ENCODE measurements at regions of chr10 and their contacts with region 1.

Region 1: DNA sequence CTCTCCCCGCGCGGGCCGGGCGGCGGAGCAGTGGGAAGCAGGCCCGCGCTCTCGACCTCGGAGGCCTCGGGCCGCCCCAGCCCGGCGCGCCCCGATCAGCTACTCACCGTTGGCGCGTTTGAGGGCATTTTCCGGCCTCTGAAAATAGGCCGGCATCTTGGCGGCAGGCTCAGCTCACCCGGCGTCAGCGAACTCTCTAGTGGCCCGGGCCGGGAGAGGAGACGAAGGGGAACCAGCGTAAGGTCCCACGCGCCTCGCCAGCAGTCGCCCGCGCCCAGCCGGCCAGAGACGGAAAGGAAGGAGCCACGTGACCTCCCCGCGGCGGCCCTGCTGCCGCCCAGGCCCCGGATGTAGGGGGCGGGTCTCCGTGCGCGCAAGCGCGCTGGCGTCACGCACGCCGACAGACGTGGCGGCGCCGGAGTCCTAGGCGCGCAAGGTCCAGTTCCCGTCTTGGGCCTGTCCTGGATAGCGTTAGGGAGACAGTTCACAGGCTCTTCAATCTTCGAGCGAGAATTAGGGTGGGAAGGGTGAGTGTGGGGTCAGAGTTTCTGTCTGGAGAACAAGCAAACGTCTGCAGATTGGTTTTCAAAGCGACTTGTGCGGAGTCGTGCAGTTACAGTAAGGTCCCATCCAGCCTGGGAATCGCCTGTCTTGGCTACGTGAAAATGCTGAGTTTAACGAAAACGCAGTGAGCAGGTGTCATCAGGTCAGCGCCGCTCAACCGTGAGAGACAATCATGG is at the start of gene EIF3A:
- DNase-seq: peak; percentile 96
- ATAC-seq: peak; percentile 97
- total RNA-seq, gene EIF3A: 88.7 TPM

Region 2: GRCh38 chr10:119103903-119104652 is 23.4 kb after region 1 on chr10 and contains the start of gene DENND10:
- intact Hi-C with region 1: loop called (anchors 2 kb)
- DNase-seq: peak; percentile 91
- ATAC-seq: peak; percentile 96
- total RNA-seq, gene DENND10: 20.2 TPM

Region 3: DNA sequence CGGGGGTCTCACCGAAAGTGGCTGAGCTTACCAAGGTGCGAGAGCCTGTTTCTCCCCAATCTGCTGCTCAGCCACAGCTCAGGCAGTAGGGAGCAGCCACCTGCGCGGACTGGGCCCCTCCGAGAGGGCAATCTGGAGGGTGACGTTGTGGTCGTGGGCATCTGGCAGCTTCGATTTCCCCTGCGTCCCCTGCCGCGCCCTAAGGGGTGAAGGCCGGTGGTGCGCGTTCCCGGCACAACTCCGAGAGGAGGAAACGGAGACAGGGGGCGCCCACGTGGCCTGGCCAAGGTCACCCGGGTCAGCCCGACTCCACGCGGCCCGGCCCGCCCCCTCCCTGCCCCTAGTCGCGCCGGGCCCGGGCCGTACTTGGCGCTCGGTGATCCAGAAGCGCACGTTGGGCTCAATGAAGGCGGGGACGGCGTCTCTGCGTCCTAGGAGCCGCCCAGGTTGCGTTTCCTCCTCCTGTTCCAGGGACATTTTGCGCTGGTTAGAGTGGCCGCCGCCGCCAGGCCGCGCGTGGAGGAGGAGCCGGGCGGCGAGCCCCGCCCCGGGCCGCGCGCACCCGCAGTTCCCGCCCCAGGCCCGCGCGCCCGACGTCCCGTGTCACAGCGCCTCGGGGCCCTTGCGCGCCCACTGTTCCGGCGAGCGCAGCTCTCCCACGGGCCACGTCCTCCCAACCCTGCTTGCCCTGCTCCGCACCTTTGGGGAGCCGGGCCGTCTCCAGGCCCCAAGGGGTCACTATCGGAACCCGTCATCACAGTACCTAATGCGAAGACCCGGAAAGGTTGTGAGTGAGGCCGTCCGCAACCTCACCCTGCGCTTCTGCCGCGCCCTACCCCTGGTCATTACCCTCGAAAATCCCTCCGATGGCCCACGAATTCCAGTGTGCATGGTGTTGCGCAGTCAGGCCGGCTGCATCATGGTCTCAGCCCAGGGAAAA is 84.8 kb after region 1 on chr10 and contains the start of gene SFXN4:
- intact Hi-C with region 1: loop called (anchors 5 kb)
- DNase-seq: peak; percentile 93
- ATAC-seq: peak; percentile 97
- total RNA-seq, gene SFXN4: 42.0 TPM

Measured in Right ventricle myocardium inferior (tissue), 1 donor.